ENCODE measurements at regions of chr4 and their contacts with region 1.

Region 1: DNA sequence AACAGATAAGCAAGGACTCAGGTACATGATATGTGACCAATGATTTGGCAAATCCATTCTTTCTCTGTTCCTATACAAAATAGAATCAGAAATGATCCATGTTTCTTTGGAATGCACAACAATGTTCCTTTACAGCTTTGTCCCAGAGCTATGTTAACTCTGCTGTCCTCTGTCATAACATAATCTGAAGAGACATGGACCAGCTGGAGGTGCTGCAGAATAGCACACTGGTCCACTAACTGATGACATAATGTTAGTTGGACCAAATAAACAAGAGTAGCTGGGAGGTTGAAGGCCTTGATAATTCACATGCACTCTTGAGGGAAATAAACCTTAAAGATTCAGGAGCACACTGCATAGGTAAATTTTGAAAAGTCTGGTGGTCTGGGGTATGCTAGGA is 23.0 kb upstream of the DHX15 start:
- DNase-seq: no peak
- H3K4me3 ChIP-seq: no peak overlapping the region
- H3K27ac ChIP-seq: no peak overlapping the region
- H3K4me1 ChIP-seq: no peaks in the 10 kb centered on the region
- H3K27me3 ChIP-seq: peaks cover 7% of the 10 kb centered on the region
- CTCF ChIP-seq: no peak

Region 2: DNA sequence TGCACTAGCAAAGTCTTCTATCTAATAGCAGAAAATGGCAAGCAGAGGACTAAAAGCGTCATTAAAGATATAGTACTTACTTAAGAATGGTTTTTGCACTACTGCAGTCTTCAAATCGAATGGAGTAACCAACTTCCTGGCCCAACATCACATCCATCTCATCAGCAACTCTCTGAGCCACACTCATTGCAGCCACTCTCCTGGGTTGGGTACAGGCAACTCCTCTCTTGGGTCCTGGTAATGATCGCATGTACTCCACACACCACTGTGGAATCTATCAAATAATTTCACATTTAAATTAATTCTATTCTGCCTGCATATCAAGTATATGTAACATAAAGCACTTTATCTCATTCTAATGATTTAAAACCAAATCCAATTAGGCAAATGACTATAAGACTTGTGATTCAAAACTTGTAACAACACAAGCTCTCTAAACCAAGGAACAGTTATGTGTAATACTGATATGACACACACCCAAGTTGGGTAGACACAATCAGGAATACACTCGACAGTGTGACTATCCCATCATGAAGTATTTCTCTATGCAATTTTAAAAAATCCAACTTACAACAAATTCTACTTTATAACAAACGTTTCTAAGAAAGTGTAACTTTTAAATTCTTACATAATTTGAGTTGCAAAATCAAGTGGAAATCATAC is 36.6 kb before region 1 on chr4:
- CTCF ChIA-PET with region 1: no interaction called
- POLR2A ChIA-PET with region 1: interaction called, 12 read pairs
- intact Hi-C with region 1: no loop called
- DNase-seq: no peak
- H3K4me3 ChIP-seq: no peak overlapping the region
- H3K27ac ChIP-seq: no peak overlapping the region
- H3K4me1 ChIP-seq: peaks cover 8% of the 10 kb centered on the region
- H3K27me3 ChIP-seq: no peaks in the 10 kb centered on the region
- CTCF ChIP-seq: no peak

Region 3: GRCh38 chr4:24730256-24731001 is 123.1 kb after region 1 on chr4:
- CTCF ChIA-PET with region 1: no interaction called
- POLR2A ChIA-PET with region 1: no interaction called
- intact Hi-C with region 1: no loop called
- DNase-seq: peak; percentile 35
- H3K4me3 ChIP-seq: no peak overlapping the region
- H3K27ac ChIP-seq: no peak overlapping the region
- H3K4me1 ChIP-seq: no peaks in the 10 kb centered on the region
- H3K27me3 ChIP-seq: peaks cover 8% of the 10 kb centered on the region
- CTCF ChIP-seq: no peak

Measured in A673 (cell line).